Activated B cell treated with CpG ODN at 0.5 μM for 24 hours (primary cell): ENCODE measurements at regions of chr3 and their contacts with region 1.

Region 1: GRCh38 chr3:52056968-52057805 is 816 bp upstream of the DUSP7 start:
- DNase-seq: peak; percentile 92
- ATAC-seq: peak; percentile 85
- H3K4me3 Mint-ChIP-seq: peak overlapping the region; percentile 88
- H3K27ac Mint-ChIP-seq: peak overlapping the region; percentile 88
- H3K4me1 Mint-ChIP-seq: peaks cover 49% of the 10 kb centered on the region
- H3K27me3 Mint-ChIP-seq: no peaks in the 10 kb centered on the region
- CTCF ChIP-seq: no peak

Region 2: DNA sequence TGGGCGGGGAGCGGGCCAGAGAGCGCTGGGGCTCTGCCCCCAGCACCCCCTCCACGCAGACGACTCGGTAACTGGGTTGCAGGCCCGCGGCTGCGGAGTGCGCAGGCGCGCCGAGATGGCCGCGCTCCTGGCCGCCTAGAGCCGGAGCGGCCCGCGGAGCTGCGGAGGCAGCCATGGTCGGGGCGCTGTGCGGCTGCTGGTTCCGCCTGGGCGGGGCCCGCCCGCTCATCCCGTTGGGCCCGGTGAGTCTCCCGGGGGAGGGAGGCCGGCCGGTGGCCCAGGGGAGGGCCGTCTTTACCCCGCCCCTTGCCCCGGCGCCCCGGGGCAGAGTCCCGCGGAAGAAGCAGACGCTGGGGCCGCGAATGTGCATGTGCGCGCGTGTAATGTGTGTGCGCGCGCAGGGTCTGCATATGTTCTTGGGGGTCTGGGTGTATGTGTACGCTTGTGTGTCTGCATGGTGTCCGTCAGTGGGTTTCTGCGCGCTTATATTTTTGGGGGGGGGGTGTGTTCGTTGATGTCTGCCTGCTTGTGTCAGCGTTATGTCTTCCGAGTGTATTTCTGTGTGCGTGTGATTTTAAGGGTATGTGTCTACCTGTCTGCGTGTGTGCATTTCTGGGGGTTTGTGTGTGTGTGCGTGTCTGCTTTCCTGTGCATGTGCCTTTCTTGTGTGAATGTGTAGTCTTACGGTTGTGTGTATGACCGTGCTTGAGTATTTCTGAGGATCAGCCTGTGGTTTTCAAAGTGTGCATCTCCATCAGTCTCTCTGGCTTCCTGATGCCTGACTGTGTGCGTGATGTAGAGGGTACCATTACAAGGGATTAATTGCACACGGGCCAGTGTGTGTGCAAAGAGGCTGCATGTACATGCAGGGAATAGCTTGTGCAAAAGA is 82.0 kb before region 1 on chr3 and contains the start of gene ABHD14A:
- CTCF ChIA-PET with region 1: no interaction called
- POLR2A ChIA-PET with region 1: interaction called, 3 read pairs
- intact Hi-C with region 1: loop called (anchors 2 kb)
- DNase-seq: peak; percentile 74
- ATAC-seq: peak; percentile 76
- H3K4me3 Mint-ChIP-seq: peak within 1 kb of the TSS; percentile 98
- H3K27ac Mint-ChIP-seq: peak within 1 kb of the TSS; percentile 91
- H3K4me1 Mint-ChIP-seq: peaks cover 28% of the 10 kb centered on the region
- H3K27me3 Mint-ChIP-seq: no peaks in the 10 kb centered on the region
- CTCF ChIP-seq: no peak
- total RNA-seq, gene ABHD14A: 5.1 and 5.2 TPM in 2 replicates

Region 3: DNA sequence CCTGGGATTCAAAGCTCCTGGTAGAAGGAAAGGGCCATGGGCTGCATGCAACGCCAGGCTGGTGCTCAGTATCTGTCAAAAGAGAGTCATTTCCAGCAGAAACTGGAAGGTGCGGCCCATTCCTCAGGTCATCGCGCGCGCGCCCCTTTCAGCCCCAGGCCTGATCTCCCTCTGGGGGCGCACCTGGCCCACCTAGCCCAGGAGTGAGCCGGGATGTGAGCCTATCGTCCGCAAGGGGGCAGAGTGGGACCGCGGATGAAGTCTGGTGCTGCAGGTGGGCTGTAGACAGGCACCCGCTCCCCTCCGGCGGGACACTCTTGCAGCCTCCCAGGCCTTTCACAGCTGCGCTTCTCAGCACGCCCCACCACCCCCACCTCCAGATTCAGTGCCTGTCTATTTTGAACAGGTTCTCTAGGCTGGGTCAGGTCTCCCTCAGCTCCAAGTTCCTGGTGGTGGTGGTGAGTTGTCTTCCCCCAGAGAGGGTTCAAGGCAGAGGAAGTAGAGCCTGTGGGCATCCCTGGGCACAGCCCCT is 55.7 kb before region 1 on chr3:
- CTCF ChIA-PET with region 1: interaction called, 24 read pairs
- POLR2A ChIA-PET with region 1: interaction called, 22 read pairs
- intact Hi-C with region 1: loop called (anchors 1 kb)
- DNase-seq: peak; percentile 85
- ATAC-seq: peak; percentile 99
- H3K4me3 Mint-ChIP-seq: no peak overlapping the region
- H3K27ac Mint-ChIP-seq: no peak overlapping the region
- H3K4me1 Mint-ChIP-seq: peaks cover 5% of the 10 kb centered on the region
- H3K27me3 Mint-ChIP-seq: peaks cover 2% of the 10 kb centered on the region
- CTCF ChIP-seq: peak; percentile 56

Region 4: DNA sequence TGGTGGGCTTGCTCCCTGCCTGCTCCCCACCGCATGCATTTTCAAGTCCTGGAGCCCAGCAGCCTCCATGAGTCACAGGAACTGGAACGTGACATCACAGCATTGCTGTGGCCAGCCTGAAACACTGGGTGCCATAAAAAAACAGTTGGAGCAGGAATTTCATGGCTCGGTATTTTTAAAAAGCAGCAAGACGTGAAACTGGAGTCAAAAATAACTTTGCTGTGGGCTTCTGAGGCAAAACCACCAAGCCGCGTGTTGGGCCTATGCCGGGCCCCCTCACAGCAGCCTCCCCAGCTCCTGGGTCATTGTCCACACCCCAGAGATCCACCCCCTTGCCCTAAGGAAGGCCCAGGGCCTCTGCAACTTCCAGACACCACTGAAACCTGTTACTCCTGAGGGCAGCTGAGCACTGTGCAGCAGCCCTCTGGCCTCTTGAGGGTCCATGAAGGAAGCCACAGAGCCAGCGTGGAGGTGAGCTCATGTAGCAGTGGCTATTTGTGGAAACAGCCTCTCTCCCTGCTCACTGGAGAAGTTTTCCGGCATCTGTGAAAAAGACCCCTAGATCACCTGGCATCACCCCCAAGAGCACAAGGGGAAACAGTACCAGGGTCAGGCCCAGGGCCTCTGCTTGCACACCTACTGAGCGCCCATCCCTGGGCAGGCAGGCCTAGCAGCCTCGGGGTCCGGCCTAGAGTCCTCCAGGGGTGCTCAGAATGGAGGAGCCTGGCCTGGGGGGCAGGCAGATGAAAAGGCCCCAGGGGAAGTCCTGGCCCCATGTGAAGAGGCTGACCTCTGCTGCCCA is 33.1 kb after region 1 on chr3:
- CTCF ChIA-PET with region 1: no interaction called
- POLR2A ChIA-PET with region 1: no interaction called
- intact Hi-C with region 1: no loop called
- DNase-seq: no peak
- ATAC-seq: no peak
- H3K4me3 Mint-ChIP-seq: no peak overlapping the region
- H3K27ac Mint-ChIP-seq: no peak overlapping the region
- H3K4me1 Mint-ChIP-seq: peaks cover 8% of the 10 kb centered on the region
- H3K27me3 Mint-ChIP-seq: no peaks in the 10 kb centered on the region
- CTCF ChIP-seq: no peak

Region 5: DNA sequence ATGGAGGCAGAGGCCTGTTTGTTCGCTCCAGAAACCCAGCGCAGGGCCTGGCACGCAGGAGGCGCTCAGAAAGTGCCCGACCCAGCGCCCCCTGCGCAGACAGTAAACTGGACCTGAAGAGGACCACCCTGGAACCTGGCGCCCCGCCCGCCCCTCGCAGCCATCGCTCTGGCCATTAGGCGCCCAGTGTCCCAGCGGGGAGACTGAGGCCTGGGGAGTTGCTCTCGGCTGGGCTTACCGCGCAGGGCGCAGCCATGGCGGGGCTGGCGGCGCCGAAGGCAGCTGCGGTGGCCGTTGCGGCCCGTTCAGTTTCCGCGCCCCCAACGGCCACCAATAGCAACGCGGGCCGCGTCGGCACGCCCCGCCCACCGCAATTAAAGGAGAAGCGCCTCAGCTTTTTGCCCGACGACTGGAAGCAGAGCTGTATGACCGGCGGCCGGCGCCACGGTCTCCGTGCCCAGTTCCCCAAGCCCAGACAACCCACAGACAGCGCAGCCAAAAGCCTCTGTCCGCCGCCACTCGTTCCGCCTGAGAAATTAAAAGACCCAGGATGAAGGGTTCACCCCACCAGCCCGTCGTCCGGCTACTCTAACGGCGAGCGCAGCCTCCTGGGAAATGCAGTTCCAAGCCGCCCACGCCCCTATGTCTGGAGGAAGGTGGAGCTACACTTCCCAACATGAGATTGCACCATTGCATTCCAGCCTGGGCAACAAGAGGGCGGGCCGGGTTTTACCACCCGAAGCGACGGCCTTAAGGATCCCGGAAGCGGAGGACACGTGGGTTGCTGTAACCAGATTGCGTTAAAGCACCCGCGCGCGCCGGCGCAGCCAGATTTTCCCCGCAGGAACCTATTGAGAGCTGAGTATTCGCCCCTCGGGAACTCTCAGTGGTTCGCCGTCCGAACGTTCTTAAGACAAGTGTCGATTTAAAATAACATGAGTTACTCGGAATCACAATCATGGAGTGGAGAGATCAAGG is 97.2 kb after region 1 on chr3 and contains the start of gene POC1A:
- CTCF ChIA-PET with region 1: interaction called, 3 read pairs
- POLR2A ChIA-PET with region 1: interaction called, 6 read pairs
- intact Hi-C with region 1: loop called (anchors 1 kb)
- DNase-seq: peak; percentile 84
- ATAC-seq: peak; percentile 87
- H3K4me3 Mint-ChIP-seq: peak within 1 kb of the TSS; percentile 96
- H3K27ac Mint-ChIP-seq: peak within 1 kb of the TSS; percentile 97
- H3K4me1 Mint-ChIP-seq: peaks cover 13% of the 10 kb centered on the region
- H3K27me3 Mint-ChIP-seq: no peaks in the 10 kb centered on the region
- CTCF ChIP-seq: no peak
- total RNA-seq, gene POC1A: 2.3 and 2.4 TPM in 2 replicates

Region 6: DNA sequence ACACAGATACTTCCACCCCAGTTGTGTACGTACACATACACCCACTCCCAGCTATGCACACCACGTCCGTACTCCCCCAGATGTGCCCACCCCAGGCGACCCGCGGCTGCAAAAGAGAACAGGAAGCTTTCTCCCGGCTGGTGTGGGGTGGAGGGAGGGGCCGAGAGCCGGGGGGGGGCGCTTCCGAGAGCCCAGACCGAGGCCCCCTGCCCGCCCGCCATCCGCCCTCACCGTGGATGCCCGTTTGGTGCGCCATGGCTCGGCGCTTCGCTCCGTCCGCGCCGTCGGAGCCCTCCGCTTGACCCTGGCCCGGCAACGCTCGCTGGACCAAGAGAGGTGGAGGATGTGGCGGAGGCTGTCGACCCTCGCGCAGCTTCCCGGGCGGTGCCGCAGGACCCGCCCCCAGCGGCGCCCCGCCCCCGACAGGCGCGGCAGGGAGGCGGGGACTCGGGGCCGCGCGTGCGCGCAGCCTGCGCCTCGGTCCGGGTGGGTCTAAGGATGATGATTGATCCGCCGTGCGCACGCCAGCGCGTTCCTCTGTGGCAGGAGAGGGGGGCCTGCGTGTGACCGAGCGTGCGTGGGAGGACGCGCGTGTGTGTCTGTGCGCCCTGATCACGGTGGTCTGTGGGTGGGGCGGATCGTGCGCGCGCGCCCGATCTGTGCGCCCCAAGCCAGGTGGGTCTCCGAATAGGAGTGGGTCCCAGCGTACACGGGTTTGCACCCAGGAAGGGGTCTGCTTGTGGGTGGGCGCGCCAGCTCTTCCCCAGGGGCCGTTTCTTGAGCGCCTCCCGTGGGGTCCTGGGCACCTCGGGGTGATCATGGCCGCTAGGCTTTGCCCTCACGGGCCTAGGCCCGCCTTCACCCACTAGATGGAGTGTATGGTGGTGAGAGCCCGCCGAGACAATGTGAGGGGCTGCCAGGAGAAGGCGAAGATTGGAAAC is 181.8 kb after region 1 on chr3 and contains the start of gene TWF2:
- CTCF ChIA-PET with region 1: no interaction called
- POLR2A ChIA-PET with region 1: interaction called, 4 read pairs
- intact Hi-C with region 1: loop called (anchors 2 kb)
- DNase-seq: peak; percentile 94
- ATAC-seq: peak; percentile 86
- H3K4me3 Mint-ChIP-seq: peak within 1 kb of the TSS; percentile 96
- H3K27ac Mint-ChIP-seq: peak within 1 kb of the TSS; percentile 93
- H3K4me1 Mint-ChIP-seq: peaks cover 72% of the 10 kb centered on the region
- H3K27me3 Mint-ChIP-seq: no peaks in the 10 kb centered on the region
- CTCF ChIP-seq: no peak
- total RNA-seq, gene TWF2: 74.1 and 76.7 TPM in 2 replicates

Region 7: GRCh38 chr3:52536369-52537164 is 479.4 kb after region 1 on chr3 and contains the start of gene UQCC5:
- CTCF ChIA-PET with region 1: no interaction called
- POLR2A ChIA-PET with region 1: interaction called, 3 read pairs
- intact Hi-C with region 1: loop called (anchors 5 kb)
- DNase-seq: peak; percentile 92
- ATAC-seq: peak; percentile 87
- H3K4me3 Mint-ChIP-seq: peak within 1 kb of the TSS; percentile 98
- H3K27ac Mint-ChIP-seq: peak within 1 kb of the TSS; percentile 96
- H3K4me1 Mint-ChIP-seq: peaks cover 42% of the 10 kb centered on the region
- H3K27me3 Mint-ChIP-seq: no peaks in the 10 kb centered on the region
- CTCF ChIP-seq: no peak
- total RNA-seq, gene UQCC5: 11.7 and 13.6 TPM in 2 replicates